HEK293T (cell line): ENCODE measurements at regions of chr10 and their contacts with region 1.

Region 1: GRCh38 chr10:102420810-102421644 is at the start of gene FBXL15:
- DNase-seq: peak; percentile 96

Region 2: GRCh38 chr10:101830322-101831168 is 590.5 kb before region 1 on chr10:
- CTCF ChIA-PET with region 1: no interaction called
- POLR2A ChIA-PET with region 1: no interaction called
- DNase-seq: peak; percentile 96

Region 3: DNA sequence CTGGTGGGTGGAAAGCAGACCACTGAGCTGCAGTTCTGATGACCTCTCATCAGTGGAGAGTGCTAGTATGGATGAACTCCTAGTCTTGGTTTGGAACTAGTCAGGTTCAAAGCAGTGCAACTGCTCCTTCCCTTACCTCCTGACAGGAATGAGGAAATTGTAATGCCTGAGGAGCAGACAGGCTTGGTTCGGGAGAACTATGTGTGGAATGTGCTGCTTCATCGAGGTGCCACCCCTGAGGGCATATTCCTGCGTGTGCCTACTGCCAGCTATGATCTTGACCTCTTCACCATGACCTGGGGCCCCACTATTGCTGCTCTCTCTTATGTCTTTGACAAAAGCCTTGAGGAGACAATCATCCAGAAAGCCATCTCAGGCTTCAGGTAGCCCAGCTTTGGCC is 53.0 kb before region 1 on chr10:
- CTCF ChIA-PET with region 1: no interaction called
- POLR2A ChIA-PET with region 1: no interaction called
- DNase-seq: no peak

Region 4: GRCh38 chr10:102394079-102394800 is 26.8 kb before region 1 on chr10:
- CTCF ChIA-PET with region 1: interaction called, 14 read pairs
- POLR2A ChIA-PET with region 1: interaction called, 17 read pairs
- DNase-seq: peak; percentile 89

Region 5: GRCh38 chr10:102399217-102400089 is 21.6 kb before region 1 on chr10:
- CTCF ChIA-PET with region 1: interaction called, 14 read pairs
- POLR2A ChIA-PET with region 1: interaction called, 17 read pairs
- DNase-seq: peak; percentile 93

Region 6: GRCh38 chr10:102432162-102432950 is 11.3 kb after region 1 on chr10 and contains the start of gene CUEDC2:
- CTCF ChIA-PET with region 1: interaction called, 6 read pairs
- POLR2A ChIA-PET with region 1: interaction called, 75 read pairs
- DNase-seq: peak; percentile 95

Region 7: DNA sequence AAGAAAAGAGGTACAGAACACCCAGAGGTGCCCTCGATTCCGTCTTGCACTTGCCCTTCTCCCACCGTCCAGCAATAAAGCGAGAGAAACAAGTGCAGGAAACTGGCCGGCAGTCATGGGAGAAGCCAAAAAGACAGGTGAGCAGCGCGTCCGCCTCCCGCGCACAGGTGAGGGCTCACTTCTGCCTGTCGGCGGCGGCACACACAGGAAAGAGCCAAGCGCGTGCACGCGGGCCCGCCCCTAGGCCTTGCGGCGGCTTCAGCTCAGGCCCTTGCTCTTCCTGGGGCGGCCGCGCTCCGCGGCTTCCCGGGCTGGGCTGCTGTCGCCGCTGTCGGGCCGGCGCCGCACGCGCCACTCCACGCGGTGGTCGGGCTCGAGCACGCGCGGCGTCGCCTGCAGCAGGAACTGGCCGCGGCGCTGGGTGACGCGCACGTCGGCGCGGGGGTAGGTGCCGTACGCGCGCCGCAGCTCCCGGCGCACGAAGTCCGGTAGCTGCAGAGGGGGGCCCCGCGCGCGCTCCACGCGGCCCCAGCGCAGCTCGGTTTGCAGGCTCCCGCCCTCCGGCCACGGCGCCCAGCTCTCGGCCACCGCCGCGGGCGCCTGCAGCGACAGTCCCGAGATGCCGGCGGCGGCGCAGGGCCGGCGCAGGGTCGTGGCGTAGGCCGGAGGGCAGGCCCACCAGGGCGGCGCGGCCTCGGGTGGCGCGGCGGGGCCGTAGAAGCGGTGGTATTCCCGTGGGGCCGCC is 29.3 kb after region 1 on chr10:
- CTCF ChIA-PET with region 1: interaction called, 3 read pairs
- POLR2A ChIA-PET with region 1: interaction called, 64 read pairs
- DNase-seq: peak; percentile 86

Region 8: GRCh38 chr10:102461187-102462054 is 40.4 kb after region 1 on chr10:
- CTCF ChIA-PET with region 1: no interaction called
- POLR2A ChIA-PET with region 1: interaction called, 41 read pairs
- DNase-seq: peak; percentile 100

Region 9: GRCh38 chr10:102511583-102512274 is 90.7 kb after region 1 on chr10:
- CTCF ChIA-PET with region 1: no interaction called
- POLR2A ChIA-PET with region 1: no interaction called
- DNase-seq: no peak